ENCODE measurements at regions of chr2 and their contacts with region 1.

Region 1: GRCh38 chr2:47323009-47323821 is 79.7 kb upstream of the MSH2 start:
- DNase-seq: peak; percentile 69
- ATAC-seq: peak; percentile 89
- H3K4me3 ChIP-seq: no peak overlapping the region
- H3K27ac ChIP-seq: no peak overlapping the region
- H3K4me1 ChIP-seq: peaks cover 65% of the 10 kb centered on the region
- H3K27me3 ChIP-seq: no peaks in the 10 kb centered on the region
- CTCF ChIP-seq: peak; percentile 100
- EP300 ChIP-seq: peak in 1 of 2 experiments; percentile 45; a peak in 1 of 4 replicates
- POLR2A ChIP-seq: peak in 1 of 2 experiments; percentile 17; a peak in 2 of 4 replicates
- RAD21 ChIP-seq: peak; percentile 99

Region 2: DNA sequence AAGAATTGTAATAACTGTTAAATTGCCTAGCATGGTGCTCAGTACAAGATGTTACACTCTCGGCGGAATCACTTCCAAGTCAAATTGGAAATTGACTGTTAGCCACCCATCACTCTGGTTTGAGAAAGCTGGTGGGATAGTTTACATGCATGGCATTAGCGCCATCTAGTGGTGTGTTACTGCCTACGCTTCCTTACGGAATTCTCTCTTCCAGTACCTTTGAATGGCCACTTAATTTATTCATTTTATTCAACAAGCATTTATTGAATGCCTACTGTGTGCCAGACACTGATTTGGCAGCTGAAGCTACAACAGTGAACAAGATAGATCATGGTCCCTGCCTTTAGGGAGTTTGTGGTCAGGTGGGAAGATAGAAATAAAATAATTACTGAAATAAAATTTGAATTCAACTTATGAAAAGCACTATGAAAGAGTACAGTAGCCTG is 672.6 kb before region 1 on chr2:
- CTCF ChIA-PET with region 1: interaction called, 3 read pairs
- POLR2A ChIA-PET with region 1: no interaction called
- in situ Hi-C with region 1: no loop called
- intact Hi-C with region 1: loop called (anchors 10 kb)
- DNase-seq: peak; percentile 82
- ATAC-seq: peak; percentile 72
- H3K4me3 ChIP-seq: no peak overlapping the region
- H3K27ac ChIP-seq: no peak overlapping the region
- H3K4me1 ChIP-seq: peaks cover 28% of the 10 kb centered on the region
- H3K27me3 ChIP-seq: peaks cover 0 to 6% of the 10 kb centered on the region in 2 experiments; a peak in 1 of 5 replicates
- CTCF ChIP-seq: peak; percentile 96
- EP300 ChIP-seq: no peak
- POLR2A ChIP-seq: no peak
- RAD21 ChIP-seq: peak; percentile 93

Region 3: GRCh38 chr2:46915811-46916630 is 407.2 kb before region 1 on chr2:
- CTCF ChIA-PET with region 1: no interaction called
- POLR2A ChIA-PET with region 1: no interaction called
- in situ Hi-C with region 1: no loop called
- intact Hi-C with region 1: loop called (anchors 5 kb)
- DNase-seq: peak; percentile 96
- ATAC-seq: peak; percentile 88
- H3K4me3 ChIP-seq: peak overlapping the region; percentile 74 to 100 (median 75)
- H3K27ac ChIP-seq: peak overlapping the region; percentile 89
- H3K4me1 ChIP-seq: peaks cover 58% of the 10 kb centered on the region
- H3K27me3 ChIP-seq: no peaks in the 10 kb centered on the region; a peak in 1 of 5 replicates
- CTCF ChIP-seq: no peak
- EP300 ChIP-seq: peak in 1 of 2 experiments; percentile 26; a peak in 1 of 4 replicates
- POLR2A ChIP-seq: peak; percentile 79 to 88
- RAD21 ChIP-seq: no peak

Region 4: GRCh38 chr2:46988733-46989481 is 334.3 kb before region 1 on chr2:
- CTCF ChIA-PET with region 1: interaction called, 7 read pairs
- POLR2A ChIA-PET with region 1: interaction called, 11 read pairs
- in situ Hi-C with region 1: no loop called
- intact Hi-C with region 1: no loop called
- DNase-seq: peak; percentile 88
- ATAC-seq: peak; percentile 65
- H3K4me3 ChIP-seq: no peak overlapping the region
- H3K27ac ChIP-seq: peak overlapping the region; percentile 62
- H3K4me1 ChIP-seq: peaks cover 36% of the 10 kb centered on the region
- H3K27me3 ChIP-seq: no peaks in the 10 kb centered on the region
- CTCF ChIP-seq: peak; percentile 73
- EP300 ChIP-seq: no peak
- POLR2A ChIP-seq: no peak
- RAD21 ChIP-seq: no peak

Region 5: DNA sequence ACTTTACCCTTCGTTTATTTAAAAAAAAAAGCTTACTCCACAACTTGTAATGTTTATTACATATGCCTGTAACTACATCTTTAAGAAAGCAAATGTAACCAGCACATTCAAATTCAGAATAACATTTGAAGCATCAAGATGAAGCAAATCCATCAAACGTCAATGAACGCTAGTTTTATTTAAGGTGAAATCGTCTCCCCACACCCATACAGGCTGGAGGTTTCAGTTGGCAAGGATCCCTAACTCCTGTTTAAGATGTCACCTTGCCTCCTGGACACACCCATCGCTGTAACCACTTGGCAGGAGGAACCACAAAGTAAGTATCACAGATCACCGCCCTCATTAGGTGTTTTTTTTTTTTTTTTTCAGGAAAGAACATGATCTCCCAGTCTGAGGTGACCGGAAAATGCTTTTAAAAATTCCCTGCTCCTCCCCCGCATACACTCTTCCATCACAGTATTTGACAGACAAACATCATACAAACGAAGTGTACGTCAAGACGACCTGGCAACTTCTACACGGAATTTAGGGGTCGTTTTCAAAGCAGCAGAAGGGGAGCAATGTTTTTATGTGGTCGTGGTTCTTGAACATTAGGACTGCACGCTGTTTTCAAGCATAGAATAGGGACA is 148.4 kb before region 1 on chr2:
- CTCF ChIA-PET with region 1: no interaction called
- POLR2A ChIA-PET with region 1: no interaction called
- in situ Hi-C with region 1: loop called (anchors 5 kb)
- intact Hi-C with region 1: no loop called
- DNase-seq: peak; percentile 49
- ATAC-seq: no peak
- H3K4me3 ChIP-seq: peak overlapping the region; percentile 89 to 99 (median 97)
- H3K27ac ChIP-seq: peak overlapping the region; percentile 66
- H3K4me1 ChIP-seq: peaks cover 57% of the 10 kb centered on the region
- H3K27me3 ChIP-seq: peaks cover 0 to 2% of the 10 kb centered on the region in 2 experiments; a peak in 1 of 5 replicates
- CTCF ChIP-seq: no peak
- EP300 ChIP-seq: no peak
- POLR2A ChIP-seq: peak in 1 of 2 experiments; percentile 74; a peak in 2 of 4 replicates
- RAD21 ChIP-seq: no peak

Region 6: DNA sequence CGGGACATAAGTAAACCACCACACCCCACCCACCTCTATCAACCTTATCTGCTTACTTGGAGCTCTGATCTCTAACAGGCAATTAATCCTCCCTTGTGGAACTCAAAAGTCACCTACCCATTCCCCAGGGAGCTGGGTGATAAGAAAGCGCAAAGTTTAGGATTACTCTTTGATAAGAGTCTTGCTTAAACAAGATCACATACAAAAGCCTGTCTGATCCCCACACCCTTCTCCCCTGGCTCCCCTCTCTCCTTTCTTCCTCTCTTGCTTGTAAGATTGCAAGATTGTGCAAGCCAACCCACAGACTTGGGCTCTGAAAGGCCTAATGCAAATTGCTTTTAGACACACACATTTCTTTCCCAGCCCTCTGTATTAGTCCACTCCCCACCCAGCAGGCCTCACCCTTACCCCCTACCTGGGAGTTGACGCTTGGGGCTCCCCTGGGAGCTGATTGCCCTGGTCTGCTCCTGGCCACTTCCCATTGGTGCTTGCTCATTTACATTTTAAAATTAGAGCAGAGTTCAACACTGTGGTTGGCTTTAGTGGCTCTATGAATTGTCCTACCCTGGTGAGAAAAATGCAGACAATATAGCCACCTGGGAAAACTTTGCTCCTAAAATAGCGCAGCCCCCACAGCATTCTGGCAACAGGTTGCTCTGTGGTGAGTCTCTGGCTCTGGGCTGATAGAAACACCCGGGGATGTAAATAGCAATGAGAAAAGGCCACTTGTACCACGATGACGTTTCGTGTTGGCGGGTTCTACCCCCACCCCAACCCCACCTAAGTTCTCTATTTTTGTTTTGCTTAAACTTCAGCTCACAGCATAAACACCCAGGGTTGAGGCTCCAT is 13.0 kb before region 1 on chr2:
- CTCF ChIA-PET with region 1: no interaction called
- POLR2A ChIA-PET with region 1: interaction called, 12 read pairs
- in situ Hi-C with region 1: no loop called
- intact Hi-C with region 1: no loop called
- DNase-seq: peak; percentile 96
- ATAC-seq: peak; percentile 83
- H3K4me3 ChIP-seq: peak overlapping the region; percentile 14 to 59 (median 45)
- H3K27ac ChIP-seq: peak overlapping the region; percentile 77
- H3K4me1 ChIP-seq: peaks cover 95% of the 10 kb centered on the region
- H3K27me3 ChIP-seq: no peaks in the 10 kb centered on the region
- CTCF ChIP-seq: no peak
- EP300 ChIP-seq: peak in 1 of 2 experiments; percentile 96; a peak in 2 of 4 replicates
- POLR2A ChIP-seq: peak in 1 of 2 experiments; percentile 20; a peak in 1 of 4 replicates
- RAD21 ChIP-seq: no peak

Measured in HepG2 (cell line).